IMR-90 (cell line): ENCODE measurements at regions of chr11 and their contacts with region 1.

Region 1: GRCh38 chr11:121112498-121113455 is 11.7 kb downstream of the TECTA start:
- DNase-seq: peak; percentile 82
- ATAC-seq: peak; percentile 99
- H3K4me3 ChIP-seq: no peak overlapping the region
- H3K27ac ChIP-seq: no peak overlapping the region
- H3K4me1 ChIP-seq: no peaks in the 10 kb centered on the region
- H3K27me3 ChIP-seq: peaks cover 30% of the 10 kb centered on the region
- CTCF ChIP-seq: peak; percentile 75
- POLR2A ChIP-seq: no peak
- RAD21 ChIP-seq: peak; percentile 76

Region 2: GRCh38 chr11:120688163-120688562 is 424.6 kb before region 1 on chr11:
- CTCF ChIA-PET with region 1: no interaction called
- POLR2A ChIA-PET with region 1: no interaction called
- dilution Hi-C with region 1: no loop called
- in situ Hi-C with region 1: no loop called
- intact Hi-C with region 1: loop called (anchors 5 kb)
- DNase-seq: no peak
- ATAC-seq: no peak
- H3K4me3 ChIP-seq: no peak overlapping the region
- H3K27ac ChIP-seq: no peak overlapping the region
- H3K4me1 ChIP-seq: no peaks in the 10 kb centered on the region
- H3K27me3 ChIP-seq: peaks cover 36% of the 10 kb centered on the region
- CTCF ChIP-seq: no peak
- POLR2A ChIP-seq: no peak
- RAD21 ChIP-seq: no peak

Region 3: DNA sequence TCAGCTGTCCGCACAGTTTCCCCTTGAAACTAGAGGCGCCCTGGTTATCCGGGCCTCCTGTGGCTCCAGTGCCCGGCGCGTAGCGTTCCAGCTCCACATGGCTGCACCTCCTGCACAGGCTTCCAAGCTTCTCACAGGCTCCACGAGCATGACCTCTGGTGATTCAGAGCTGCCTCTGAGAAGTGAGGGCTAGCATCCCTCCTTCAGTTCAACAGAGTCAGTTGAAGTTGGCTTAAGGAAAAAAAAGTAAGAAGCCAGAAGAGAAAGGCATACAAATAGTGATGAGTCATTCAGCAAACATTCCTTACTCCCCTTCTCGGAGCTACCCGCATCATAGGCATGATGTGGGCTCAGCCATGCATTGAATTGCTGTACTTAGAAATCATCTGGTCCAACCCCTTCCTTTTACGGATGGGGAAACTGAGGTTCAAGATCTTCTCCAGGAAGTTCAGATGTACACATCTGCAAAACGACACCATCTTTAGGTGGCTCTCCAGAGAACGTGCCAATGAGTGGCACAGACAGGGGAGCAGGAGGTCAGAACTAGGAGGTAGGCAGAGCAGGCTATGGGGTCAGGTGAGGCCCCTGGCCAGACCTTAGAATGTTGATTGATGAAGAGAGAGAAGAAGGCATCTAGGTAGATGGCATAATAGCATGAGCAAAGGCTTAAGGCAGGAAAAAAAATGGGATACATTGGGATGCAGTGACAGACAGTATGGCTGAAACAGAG is 305.2 kb before region 1 on chr11:
- CTCF ChIA-PET with region 1: no interaction called
- POLR2A ChIA-PET with region 1: no interaction called
- dilution Hi-C with region 1: no loop called
- in situ Hi-C with region 1: no loop called
- intact Hi-C with region 1: loop called (anchors 5 kb)
- DNase-seq: peak; percentile 95
- ATAC-seq: peak; percentile 97
- H3K4me3 ChIP-seq: no peak overlapping the region
- H3K27ac ChIP-seq: no peak overlapping the region
- H3K4me1 ChIP-seq: peaks cover 6% of the 10 kb centered on the region; the same call in 1 of the 2 replicates
- H3K27me3 ChIP-seq: no peaks in the 10 kb centered on the region
- CTCF ChIP-seq: no peak
- POLR2A ChIP-seq: no peak
- RAD21 ChIP-seq: no peak

Region 4: GRCh38 chr11:120929664-120930154 is 183.1 kb before region 1 on chr11:
- CTCF ChIA-PET with region 1: no interaction called
- POLR2A ChIA-PET with region 1: no interaction called
- dilution Hi-C with region 1: no loop called
- in situ Hi-C with region 1: no loop called
- intact Hi-C with region 1: loop called (anchors 2 kb)
- DNase-seq: peak; percentile 26
- ATAC-seq: peak; percentile 65; the same call in 1 of the 2 replicates
- H3K4me3 ChIP-seq: no peak overlapping the region
- H3K27ac ChIP-seq: no peak overlapping the region
- H3K4me1 ChIP-seq: no peaks in the 10 kb centered on the region
- H3K27me3 ChIP-seq: peaks cover 4% of the 10 kb centered on the region; the same call in 1 of the 2 replicates
- CTCF ChIP-seq: peak; percentile 47
- POLR2A ChIP-seq: no peak
- RAD21 ChIP-seq: peak; percentile 48

Region 5: DNA sequence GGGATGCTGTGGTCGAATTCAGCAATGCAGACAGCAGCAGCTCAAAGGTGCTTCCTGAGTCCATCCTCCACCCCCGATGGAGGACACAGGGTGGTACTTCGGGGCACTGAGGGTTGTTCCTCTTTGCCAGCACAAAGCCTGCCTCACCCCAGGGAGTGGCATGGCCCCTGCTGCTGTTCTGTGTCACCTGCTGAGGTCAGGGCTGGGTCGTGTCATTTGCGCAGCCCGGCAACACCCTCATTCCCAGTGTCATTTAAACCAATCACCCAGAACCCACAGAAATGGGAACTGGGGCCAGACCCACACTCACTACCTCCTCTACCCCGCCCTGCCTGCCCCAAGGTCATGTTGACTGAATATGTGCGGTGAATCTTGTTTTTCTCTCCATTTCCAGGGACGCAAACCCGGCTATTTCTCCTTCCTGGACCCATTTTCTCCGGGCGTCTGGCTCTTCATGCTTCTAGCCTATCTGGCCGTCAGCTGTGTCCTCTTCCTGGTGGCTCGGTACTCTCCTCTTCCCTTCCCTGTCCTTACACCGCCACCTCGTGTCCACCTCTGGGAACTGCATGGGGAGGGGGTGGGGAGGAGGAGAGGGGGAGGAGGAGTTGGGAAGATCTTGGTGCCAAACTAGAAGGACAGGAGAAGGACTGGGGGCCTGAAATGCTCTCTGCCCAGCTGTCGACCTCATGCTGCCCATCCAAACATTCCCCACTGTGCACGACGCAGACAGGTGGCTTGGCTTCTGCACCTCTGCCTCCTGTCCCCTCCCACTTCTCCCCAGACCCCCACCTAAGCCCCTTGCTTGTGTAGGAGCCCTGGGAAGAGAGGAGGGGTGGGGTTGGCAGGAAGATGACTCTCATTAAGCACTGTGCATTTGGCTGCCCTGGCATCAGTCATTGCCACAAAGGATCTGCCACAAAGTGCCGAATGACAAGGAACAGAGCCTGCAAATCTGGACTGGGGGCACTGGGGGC is 160.0 kb before region 1 on chr11:
- CTCF ChIA-PET with region 1: no interaction called
- POLR2A ChIA-PET with region 1: no interaction called
- dilution Hi-C with region 1: no loop called
- in situ Hi-C with region 1: no loop called
- intact Hi-C with region 1: loop called (anchors 1 kb)
- DNase-seq: peak; percentile 64
- ATAC-seq: peak; percentile 100
- H3K4me3 ChIP-seq: no peak overlapping the region
- H3K27ac ChIP-seq: no peak overlapping the region
- H3K4me1 ChIP-seq: no peaks in the 10 kb centered on the region
- H3K27me3 ChIP-seq: peaks cover 8% of the 10 kb centered on the region
- CTCF ChIP-seq: peak; percentile 74
- POLR2A ChIP-seq: no peak
- RAD21 ChIP-seq: peak; percentile 81

Region 6: DNA sequence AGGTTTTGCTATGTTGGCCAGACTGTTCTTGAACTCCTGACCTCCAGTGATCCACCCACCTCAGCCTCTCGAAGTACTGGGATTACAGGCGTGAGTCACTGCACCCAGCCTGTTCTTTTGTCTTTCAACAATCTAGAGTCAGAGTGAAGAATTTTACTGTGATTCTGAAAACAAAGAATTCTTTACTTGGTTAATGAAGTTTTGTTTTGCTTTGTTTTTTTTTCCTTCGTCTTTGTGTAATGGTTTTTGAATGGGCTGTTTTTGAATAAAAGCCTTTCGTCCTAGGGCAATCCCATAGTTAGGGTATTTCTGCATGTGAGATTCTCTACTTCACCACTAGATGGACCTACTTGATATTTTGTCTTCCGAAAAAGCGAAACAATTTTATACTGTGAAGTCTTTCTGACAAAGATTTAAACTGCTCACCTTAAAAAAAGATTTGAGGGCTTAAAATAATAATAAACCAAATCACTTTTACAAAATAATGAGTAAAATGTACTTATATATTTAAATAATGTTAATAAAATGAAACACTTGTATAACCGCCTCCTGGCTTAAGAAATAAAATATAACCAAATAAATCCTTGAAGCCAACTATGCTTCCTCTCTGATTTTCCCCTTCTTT is 136.4 kb after region 1 on chr11:
- CTCF ChIA-PET with region 1: no interaction called
- POLR2A ChIA-PET with region 1: no interaction called
- dilution Hi-C with region 1: no loop called
- in situ Hi-C with region 1: no loop called
- intact Hi-C with region 1: no loop called
- DNase-seq: peak; percentile 48
- ATAC-seq: peak; percentile 94
- H3K4me3 ChIP-seq: no peak overlapping the region
- H3K27ac ChIP-seq: no peak overlapping the region
- H3K4me1 ChIP-seq: no peaks in the 10 kb centered on the region
- H3K27me3 ChIP-seq: peaks cover 3% of the 10 kb centered on the region
- CTCF ChIP-seq: peak; percentile 67
- POLR2A ChIP-seq: no peak
- RAD21 ChIP-seq: peak; percentile 47